Posterior cingulate gyrus (tissue), 11 donors: ENCODE measurements at regions of chr1 and their contacts with region 1.

Region 1: DNA sequence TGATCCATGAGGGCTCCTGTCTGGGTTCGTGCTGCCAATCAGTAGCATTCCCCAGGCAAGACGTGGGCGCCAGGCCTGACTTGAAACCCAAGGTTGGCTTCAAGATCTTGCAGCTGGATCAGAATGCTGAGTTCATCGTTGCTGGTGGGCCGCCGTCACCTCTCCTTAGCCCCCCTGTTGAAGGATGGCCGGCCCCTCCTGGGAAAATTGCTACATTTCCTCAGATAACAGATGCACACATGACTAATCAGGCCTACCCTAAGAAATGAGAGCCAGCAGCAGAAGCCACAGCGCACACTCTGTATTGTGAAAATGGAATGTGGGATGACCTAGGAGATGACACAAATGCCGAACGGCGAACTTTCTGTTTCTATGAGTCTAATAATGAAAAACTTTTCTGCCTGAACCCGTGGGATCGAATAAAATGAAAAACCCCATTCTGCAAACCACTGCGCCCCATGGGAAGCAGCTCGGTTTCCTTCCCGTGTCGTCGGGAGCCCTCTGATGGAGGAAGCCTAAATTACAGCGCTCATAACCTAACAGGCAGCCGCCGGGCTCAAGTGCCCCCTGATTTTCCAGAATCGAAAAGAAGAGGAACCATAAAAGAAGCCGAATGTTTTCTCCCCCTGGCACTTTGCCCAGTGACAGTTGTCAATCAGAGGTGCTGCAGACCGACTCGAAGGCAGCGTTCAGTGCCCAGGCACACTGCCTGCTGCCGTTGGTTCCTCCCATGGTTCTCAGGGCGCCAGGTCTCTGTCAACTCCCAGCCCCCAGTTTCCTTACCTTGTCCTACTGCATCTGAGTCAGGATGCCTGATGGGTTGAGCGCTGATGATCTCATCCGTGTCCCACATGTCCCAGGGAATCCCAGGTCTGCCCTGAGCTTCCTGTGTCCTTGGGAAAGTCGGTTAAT is 38.2 kb upstream of the H6PD start:
- DNase-seq: peak; percentile 54 to 94 (median 78)

Region 2: DNA sequence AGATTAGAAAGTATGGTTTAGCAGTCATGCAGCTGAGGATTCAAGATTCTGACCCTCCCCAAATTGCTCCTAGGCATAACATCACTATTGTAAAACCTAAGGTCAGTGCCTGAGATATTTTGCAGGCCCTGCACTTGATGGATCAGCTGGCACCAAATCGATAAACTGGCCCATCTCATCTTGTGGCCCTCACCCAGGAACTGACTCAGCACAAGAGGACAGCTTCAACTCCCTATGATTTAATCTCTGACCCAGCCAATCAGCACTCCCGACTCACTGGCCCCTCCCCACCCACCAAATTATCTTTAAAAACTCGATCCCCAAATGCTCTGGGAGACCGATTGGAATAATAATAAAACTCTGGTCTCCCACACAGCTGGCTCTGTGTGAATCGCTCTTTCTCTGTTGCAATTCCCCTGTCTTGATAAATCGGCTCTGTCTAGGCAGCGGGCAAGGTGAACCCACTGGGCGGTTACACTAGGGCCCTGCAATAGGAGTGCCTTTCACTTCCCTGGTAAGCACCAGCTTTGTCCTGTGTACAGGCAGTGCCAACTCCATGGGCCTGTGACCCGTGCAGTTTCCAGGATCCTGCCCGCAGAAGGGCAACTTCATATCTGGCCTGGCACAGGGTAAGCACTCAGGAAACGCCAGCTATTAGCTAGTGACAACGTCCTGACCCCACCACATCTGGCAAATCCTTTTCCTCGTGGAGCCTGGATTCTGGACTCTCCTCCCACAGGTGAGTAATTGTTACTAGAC is 98.3 kb before region 1 on chr1:
- intact Hi-C with region 1: no loop called
- DNase-seq: no peak

Region 3: DNA sequence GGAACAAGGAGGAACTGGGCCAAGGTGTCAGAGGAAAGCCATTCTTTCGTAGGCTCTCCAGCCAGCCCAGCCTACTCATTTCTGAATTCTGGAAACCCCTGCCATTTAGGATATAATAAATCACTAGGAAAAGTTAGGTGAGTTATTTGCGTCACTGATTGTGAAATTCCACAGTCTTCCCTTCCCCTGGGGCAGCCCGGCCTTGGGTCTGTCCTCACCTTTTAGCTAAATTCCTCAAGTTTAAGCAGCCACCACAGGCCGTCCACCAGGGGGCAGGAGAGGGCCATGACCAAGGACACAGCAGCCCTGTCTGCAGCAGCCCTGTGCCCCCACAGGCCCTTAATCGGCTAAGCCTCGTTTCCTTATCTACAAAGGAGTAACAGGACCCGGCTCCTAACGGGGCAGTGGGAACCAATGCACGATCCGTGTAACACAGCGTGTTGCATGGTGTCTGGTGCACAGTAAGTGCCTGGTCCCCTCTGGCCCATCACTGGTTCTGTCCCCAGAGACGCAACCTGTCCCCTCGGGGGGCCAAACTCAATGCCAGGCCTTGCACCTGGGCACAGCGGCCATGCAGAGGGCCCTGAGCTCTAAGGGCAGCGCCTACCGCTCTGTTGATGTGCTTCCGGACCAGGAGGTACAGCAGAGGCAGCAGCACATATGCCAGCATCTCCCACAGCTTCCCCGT is 85.6 kb before region 1 on chr1:
- intact Hi-C with region 1: loop called (anchors 1 kb)
- DNase-seq: peak; percentile 79 to 98 (median 92)

Region 4: DNA sequence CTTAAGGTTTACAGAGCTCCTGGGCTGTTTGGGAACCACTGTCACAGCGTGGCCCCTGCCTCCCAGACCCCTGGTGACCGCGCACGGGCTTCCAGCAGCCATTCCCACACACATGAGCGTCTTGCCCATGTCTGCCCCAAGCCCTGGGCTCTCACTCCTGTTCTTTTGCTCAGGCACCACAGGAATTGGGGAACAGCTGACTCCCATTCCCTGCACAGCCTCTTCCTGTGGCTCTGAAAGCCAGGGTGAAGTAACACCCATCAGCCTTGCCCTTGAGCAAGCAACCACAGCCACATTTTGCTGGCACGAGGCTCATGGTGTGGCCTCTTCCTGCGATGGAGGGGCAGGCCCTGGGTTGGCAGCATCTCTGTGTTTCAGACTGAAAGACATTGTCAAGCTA is 53.1 kb before region 1 on chr1:
- intact Hi-C with region 1: loop called (anchors 2 kb)
- DNase-seq: peak in 2 of 10 donors; percentile 62 to 75

Region 5: GRCh38 chr1:9181176-9181906 is 15.0 kb before region 1 on chr1:
- intact Hi-C with region 1: loop called (anchors 2 kb)
- DNase-seq: peak in 7 of 10 donors; percentile 44 to 93 (median 72)

Region 6: GRCh38 chr1:9651565-9652378 is 455.4 kb after region 1 on chr1 and contains the start of gene PIK3CD:
- intact Hi-C with region 1: no loop called
- DNase-seq: peak in 4 of 10 donors; percentile 20 to 86 (median 60)